BJ (cell line): ENCODE measurements at regions of chr6 and their contacts with region 1.

Region 1: DNA sequence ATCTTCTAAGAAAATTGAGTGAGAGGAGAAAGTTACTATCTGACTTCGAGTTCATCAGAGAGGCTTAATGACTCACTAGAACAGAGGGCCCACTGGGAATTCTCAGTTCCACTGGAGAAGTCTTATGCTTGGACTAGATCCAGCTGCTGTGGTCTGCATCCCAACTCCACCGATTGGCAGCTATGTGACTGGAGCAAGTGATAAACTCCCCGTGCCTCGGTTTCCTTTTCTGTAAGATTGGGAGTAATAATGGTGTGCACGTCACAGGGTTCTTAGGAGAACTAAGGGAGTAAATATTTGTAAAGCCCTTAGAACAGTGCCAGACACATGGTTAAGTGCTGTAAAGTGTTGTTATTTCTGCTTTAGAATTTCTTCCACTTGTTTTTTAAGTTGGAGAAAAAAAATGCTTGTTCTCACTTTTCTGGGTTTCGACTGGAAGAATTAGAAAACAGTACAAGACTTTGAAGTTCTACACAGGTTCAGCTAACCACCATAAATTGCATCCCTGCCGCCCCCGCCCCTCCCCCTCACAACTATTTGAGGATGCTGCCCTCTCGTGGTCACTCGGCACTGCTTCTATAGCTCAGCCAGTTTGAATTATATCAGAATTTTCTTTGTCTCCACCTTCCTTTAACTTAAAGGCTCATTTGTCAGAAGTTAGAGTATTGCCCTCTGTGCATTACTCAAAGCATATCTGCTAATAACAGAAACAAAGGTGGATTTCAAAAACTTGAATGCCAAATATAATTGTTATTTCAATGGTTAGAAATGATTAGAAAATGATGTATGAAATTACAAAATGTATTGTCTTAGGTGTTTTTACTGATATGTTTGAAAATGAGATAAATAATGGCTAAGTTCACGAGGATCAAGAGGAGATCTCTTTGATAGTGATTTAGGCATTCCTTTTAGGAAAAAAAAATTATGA is 95.0 kb upstream of the IFNGR1 start:
- DNase-seq: no peak
- H3K4me3 ChIP-seq: no peak overlapping the region
- H3K27me3 ChIP-seq: no peaks in the 10 kb centered on the region
- CTCF ChIP-seq: peak; percentile 83

Region 2: GRCh38 chr6:137076277-137077068 is 237.7 kb before region 1 on chr6:
- CTCF ChIA-PET with region 1: interaction called, 10 read pairs
- POLR2A ChIA-PET with region 1: no interaction called
- DNase-seq: no peak
- H3K4me3 ChIP-seq: no peak overlapping the region
- H3K27me3 ChIP-seq: no peaks in the 10 kb centered on the region
- CTCF ChIP-seq: peak; percentile 78

Region 3: DNA sequence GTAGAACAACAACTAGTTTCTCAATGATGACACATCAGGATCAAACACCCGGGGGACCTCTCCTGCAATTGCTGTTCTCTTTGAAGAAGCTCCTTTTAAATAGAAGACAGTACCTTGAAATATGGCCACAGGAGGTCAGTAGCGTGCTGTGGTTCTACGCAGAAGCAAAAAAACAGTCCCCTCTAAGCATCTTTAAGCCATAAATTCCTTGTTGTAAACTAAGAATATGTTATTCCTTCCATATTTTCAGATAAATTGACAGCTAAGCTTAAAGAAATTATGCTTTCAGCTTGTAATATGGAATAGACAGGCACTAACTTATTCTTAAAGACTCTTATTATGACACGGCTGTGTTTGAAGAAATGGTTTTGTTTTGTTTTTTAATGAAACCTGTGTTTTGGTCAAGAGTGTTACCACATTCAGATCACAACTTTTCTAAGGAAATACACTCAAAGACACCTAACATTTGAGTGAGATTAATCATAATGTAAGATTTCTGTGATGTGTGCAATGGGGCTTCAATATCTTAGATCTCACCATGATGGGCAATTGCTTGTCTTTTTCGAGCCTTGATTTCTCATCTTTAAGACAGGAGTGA is 219.7 kb before region 1 on chr6:
- CTCF ChIA-PET with region 1: interaction called, 34 read pairs
- POLR2A ChIA-PET with region 1: no interaction called
- DNase-seq: peak; percentile 11
- H3K4me3 ChIP-seq: no peak overlapping the region
- H3K27me3 ChIP-seq: 0 out of 2 replicates have a peak, but pooled peaks cover 3% of the 10 kb centered on the region
- CTCF ChIP-seq: peak; percentile 69

Region 4: GRCh38 chr6:137248702-137249101 is 65.5 kb before region 1 on chr6:
- CTCF ChIA-PET with region 1: interaction called, 12 read pairs
- POLR2A ChIA-PET with region 1: no interaction called
- DNase-seq: no peak
- H3K4me3 ChIP-seq: no peak overlapping the region
- H3K27me3 ChIP-seq: peaks cover 4% of the 10 kb centered on the region; the same call in 1 of the 2 replicates
- CTCF ChIP-seq: no peak

Region 5: GRCh38 chr6:137271245-137272183 is 42.7 kb before region 1 on chr6:
- CTCF ChIA-PET with region 1: interaction called, 20 read pairs
- POLR2A ChIA-PET with region 1: no interaction called
- DNase-seq: no peak
- H3K4me3 ChIP-seq: no peak overlapping the region
- H3K27me3 ChIP-seq: no peaks in the 10 kb centered on the region
- CTCF ChIP-seq: peak; percentile 84

Region 6: GRCh38 chr6:137297887-137298286 is 16.3 kb before region 1 on chr6:
- CTCF ChIA-PET with region 1: interaction called, 10 read pairs
- POLR2A ChIA-PET with region 1: no interaction called
- DNase-seq: no peak
- H3K4me3 ChIP-seq: no peak overlapping the region
- H3K27me3 ChIP-seq: no peaks in the 10 kb centered on the region; the same call in 1 of the 2 replicates
- CTCF ChIP-seq: no peak

Region 7: GRCh38 chr6:137958811-137959565 is 644.8 kb after region 1 on chr6:
- CTCF ChIA-PET with region 1: no interaction called
- POLR2A ChIA-PET with region 1: no interaction called
- DNase-seq: no peak
- H3K4me3 ChIP-seq: no peak overlapping the region
- H3K27me3 ChIP-seq: no peaks in the 10 kb centered on the region
- CTCF ChIP-seq: no peak